AG04449 (cell line): ENCODE measurements at regions of chr4 and their contacts with region 1.

Region 1: DNA sequence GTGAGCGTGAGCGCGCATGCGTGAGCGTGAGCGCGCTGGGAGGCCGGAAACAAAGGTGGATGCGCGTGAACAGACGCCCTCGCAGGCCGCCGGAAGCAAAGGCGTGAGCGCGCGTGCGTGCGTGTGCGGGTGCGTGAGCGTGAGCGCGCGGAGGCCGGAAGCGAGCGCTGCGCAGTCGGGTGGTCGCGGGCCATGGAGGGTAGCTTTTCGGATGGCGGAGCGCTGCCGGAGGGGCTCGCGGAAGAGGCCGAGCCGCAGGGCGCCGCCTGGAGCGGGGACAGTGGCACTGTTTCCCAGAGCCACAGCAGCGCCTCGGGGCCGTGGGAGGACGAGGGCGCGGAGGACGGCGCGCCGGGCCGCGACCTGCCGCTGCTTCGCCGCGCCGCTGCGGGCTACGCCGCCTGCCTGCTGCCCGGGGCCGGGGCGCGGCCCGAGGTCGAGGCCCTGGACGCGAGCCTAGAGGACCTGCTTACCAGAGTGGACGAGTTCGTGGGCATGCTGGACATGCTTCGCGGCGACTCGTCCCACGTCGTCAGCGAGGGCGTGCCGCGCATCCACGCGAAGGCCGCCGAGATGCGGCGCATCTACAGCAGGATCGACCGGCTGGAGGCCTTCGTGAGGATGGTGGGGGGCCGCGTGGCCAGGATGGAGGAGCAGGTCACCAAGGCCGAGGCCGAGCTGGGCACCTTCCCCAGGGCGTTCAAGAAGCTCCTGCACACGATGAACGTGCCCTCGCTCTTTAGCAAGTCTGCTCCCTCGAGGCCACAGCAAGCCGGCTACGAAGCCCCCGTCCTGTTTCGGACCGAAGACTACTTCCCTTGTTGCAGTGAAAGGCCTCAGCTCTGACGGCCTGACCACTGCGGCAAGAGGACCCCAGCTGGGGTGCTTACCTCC is at the start of gene BLOC1S4:
- DNase-seq: no peak
- H3K4me3 ChIP-seq: peak within 1 kb of the TSS; percentile 92
- CTCF ChIP-seq: peak; percentile 24

Region 2: DNA sequence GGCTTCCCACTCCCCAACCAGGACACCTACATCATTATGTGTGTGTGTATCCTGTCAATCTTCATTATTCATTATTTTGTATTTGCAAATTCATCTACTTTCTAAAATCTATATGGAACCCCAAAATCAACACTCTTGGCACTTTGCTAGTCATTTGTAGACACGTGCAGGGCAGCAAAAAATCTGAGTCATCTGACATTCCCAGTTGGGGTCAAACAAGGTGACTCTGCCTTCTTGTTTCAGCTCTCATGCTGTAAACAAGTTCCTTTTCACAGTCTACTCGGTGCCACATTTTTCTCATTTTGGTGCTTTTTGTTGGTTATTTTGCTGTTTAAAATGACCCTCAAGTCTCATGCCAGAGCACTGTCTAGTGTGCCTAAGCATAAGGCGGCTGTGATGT is 12.5 kb before region 1 on chr4:
- CTCF ChIA-PET with region 1: interaction called, 17 read pairs
- POLR2A ChIA-PET with region 1: interaction called, 3 read pairs
- DNase-seq: no peak
- H3K4me3 ChIP-seq: no peak overlapping the region
- CTCF ChIP-seq: no peak

Region 3: GRCh38 chr4:6732441-6733357 is 16.4 kb after region 1 on chr4:
- CTCF ChIA-PET with region 1: interaction called, 52 read pairs
- POLR2A ChIA-PET with region 1: interaction called, 5 read pairs
- DNase-seq: peak; percentile 67
- H3K4me3 ChIP-seq: no peak overlapping the region
- CTCF ChIP-seq: no peak

Region 4: GRCh38 chr4:6885951-6886557 is 169.8 kb after region 1 on chr4:
- CTCF ChIA-PET with region 1: interaction called, 69 read pairs
- POLR2A ChIA-PET with region 1: no interaction called
- DNase-seq: no peak
- H3K4me3 ChIP-seq: peak overlapping the region; percentile 23; the same call in 1 of the 2 replicates
- CTCF ChIP-seq: peak; percentile 39

Region 5: GRCh38 chr4:6909073-6909965 is 193.1 kb after region 1 on chr4 and contains the start of gene TBC1D14:
- CTCF ChIA-PET with region 1: interaction called, 16 read pairs
- POLR2A ChIA-PET with region 1: no interaction called
- DNase-seq: no peak
- H3K4me3 ChIP-seq: peak within 1 kb of the TSS; percentile 71
- CTCF ChIP-seq: peak; percentile 21

Region 6: DNA sequence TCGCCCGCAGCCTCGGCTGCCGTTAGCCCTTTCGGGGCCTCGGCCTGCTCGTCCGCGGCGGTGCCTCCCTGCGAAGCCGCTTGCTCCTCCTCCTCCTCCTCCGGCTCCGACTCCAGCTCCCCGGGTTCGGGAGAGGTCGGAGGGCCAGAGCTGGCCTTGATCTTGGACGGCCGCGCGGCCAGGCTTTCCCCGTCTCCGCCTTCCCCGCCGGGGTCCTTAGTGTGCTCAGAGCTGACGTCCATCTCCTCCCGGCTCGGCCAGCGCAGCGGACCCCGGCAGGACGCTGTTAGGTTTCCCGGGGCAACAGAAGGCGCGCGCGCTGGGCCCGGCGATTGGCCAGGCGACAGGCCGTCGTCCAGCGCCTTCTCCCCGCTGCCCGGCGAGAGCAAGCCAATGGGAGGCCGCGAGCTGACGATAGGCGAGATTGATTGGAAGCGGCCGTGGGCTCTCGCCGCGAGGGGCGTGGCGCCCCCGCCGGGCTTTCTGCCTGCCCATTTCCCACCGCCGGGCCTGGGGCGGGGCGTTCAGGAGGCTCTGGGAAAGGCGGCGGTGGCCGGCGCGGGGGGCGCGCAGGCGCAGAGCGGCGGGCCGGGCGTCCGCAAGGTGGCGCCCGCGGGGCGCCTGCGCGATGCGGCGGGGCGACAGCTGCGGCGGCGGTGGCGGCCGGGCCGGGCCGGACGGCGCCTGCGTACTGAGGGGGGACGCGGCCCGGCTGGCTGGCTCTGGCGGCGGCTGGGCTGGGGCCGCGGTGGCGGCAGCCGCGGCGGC is 326.6 kb after region 1 on chr4 and contains the start of gene TADA2B:
- CTCF ChIA-PET with region 1: interaction called, 11 read pairs
- POLR2A ChIA-PET with region 1: no interaction called
- DNase-seq: peak; percentile 74
- H3K4me3 ChIP-seq: peak within 1 kb of the TSS; percentile 80
- CTCF ChIP-seq: peak; percentile 12

Region 7: DNA sequence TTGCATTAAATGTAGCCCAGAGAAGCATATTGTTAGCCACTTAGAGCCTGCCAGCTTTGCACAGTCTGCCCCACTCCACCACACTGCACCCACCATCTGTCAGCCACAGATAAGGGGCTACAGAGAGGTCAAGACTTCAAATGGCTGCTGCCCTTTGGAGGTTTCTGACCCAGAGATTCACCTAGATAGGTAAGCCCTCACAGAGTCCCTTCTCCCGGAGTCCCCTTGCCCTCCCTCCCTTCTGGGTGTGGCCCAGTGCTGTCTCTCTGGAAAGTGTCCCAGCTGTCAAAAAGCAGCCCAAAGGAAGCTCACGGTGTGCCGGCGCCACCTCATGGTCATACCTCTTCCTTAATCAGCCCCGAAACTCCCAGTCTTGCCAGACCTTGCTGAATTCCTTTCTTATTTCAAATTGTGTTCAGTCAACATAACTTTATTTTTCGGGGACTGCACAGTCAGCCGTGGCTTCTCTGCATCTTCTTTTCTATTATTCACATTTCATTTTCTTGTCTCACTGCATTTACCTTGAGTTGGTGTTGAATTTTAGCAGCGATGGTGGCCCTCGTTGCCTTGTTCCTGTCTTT is 365.7 kb after region 1 on chr4:
- CTCF ChIA-PET with region 1: interaction called, 16 read pairs
- POLR2A ChIA-PET with region 1: no interaction called
- DNase-seq: no peak
- H3K4me3 ChIP-seq: no peak overlapping the region
- CTCF ChIP-seq: peak; percentile 41